Endothelial cell of umbilical vein (primary cell): ENCODE measurements at regions of chr20 and their contacts with region 1.

Region 1: DNA sequence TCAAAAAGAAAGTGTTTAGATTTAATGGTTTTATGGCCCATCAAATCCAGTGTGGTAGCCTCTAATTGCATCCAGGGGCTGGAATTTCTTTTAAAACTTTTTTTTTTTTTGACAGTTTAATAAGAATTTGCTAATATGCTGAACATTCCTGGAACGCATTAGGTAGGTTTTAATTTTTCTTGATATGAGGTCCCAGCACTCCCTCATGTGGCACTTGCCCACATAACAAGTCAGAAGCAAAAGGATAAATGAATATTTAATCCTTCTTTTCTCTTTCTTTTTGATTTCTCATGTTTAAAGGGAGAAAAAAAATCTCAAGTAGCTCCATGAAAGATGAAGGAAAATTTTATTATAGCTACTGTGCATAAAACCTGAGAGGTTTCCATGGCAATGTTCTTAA is 13.5 kb downstream of the HAO1 start:
- DNase-seq: peak; percentile 75
- H3K4me3 ChIP-seq: no peak overlapping the region
- H3K27ac ChIP-seq: peak overlapping the region; percentile 92
- H3K4me1 ChIP-seq: peaks cover 26% of the 10 kb centered on the region
- H3K27me3 ChIP-seq: no peaks in the 10 kb centered on the region
- CTCF ChIP-seq: peak; percentile 47 to 52
- POLR2A ChIP-seq: no peak

Region 2: GRCh38 chr20:6583134-6583738 is 1343.5 kb before region 1 on chr20:
- CTCF ChIA-PET with region 1: interaction called, 3 read pairs
- POLR2A ChIA-PET with region 1: no interaction called
- dilution Hi-C with region 1: no loop called
- intact Hi-C with region 1: loop called (anchors 2 kb)
- DNase-seq: peak; percentile 78
- H3K4me3 ChIP-seq: no peak overlapping the region
- H3K27ac ChIP-seq: peak overlapping the region; percentile 24
- H3K4me1 ChIP-seq: peaks cover 15% of the 10 kb centered on the region
- H3K27me3 ChIP-seq: no peaks in the 10 kb centered on the region
- CTCF ChIP-seq: peak; percentile 56 to 61
- POLR2A ChIP-seq: no peak

Region 3: DNA sequence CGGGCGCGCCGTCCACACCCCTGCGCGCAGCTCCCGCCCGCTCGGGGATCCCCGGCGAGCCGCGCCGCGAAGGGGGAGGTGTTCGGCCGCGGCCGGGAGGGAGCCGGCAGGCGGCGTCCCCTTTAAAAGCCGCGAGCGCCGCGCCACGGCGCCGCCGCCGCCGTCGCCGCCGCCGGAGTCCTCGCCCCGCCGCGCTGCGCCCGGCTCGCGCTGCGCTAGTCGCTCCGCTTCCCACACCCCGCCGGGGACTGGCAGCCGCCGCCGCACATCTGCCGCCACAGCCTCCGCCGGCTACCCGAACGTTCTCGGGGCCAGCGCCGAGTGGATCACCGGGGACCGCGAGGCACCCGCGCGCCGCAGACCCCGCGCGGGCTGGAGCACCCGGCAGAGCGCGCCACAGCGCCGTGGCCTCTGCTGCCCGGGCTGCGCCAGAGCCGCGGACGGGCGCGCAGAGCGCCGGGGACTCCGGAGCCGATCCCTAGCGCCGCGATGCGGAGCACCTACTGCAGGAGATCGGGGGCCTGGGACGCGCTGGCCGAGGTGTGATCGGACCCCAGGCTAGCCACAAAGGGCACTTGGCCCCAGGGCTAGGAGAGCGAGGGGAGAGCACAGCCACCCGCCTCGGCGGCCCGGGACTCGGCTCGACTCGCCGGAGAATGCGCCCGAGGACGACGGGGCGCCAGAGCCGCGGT is 1159.1 kb before region 1 on chr20 and contains the start of gene BMP2:
- CTCF ChIA-PET with region 1: interaction called, 9 read pairs
- POLR2A ChIA-PET with region 1: no interaction called
- dilution Hi-C with region 1: no loop called
- intact Hi-C with region 1: loop called (anchors 2 kb)
- DNase-seq: peak; percentile 74
- H3K4me3 ChIP-seq: peak within 1 kb of the TSS; percentile 87 to 99 (median 92)
- H3K27ac ChIP-seq: peak within 1 kb of the TSS; percentile 61
- H3K4me1 ChIP-seq: peaks cover 21% of the 10 kb centered on the region
- H3K27me3 ChIP-seq: no peaks in the 10 kb centered on the region
- CTCF ChIP-seq: no peak
- POLR2A ChIP-seq: peak; percentile 46
- total RNA-seq, gene BMP2: 11.1 and 15.7 TPM in 2 replicates

Region 4: GRCh38 chr20:7375905-7376304 is 550.9 kb before region 1 on chr20:
- CTCF ChIA-PET with region 1: no interaction called
- POLR2A ChIA-PET with region 1: no interaction called
- dilution Hi-C with region 1: no loop called
- intact Hi-C with region 1: loop called (anchors 5 kb)
- DNase-seq: peak; percentile 34
- H3K4me3 ChIP-seq: no peak overlapping the region
- H3K27ac ChIP-seq: no peak overlapping the region
- H3K4me1 ChIP-seq: no peaks in the 10 kb centered on the region
- H3K27me3 ChIP-seq: no peaks in the 10 kb centered on the region
- CTCF ChIP-seq: peak; percentile 9 to 23
- POLR2A ChIP-seq: no peak

Region 5: GRCh38 chr20:7497985-7498384 is 428.8 kb before region 1 on chr20:
- CTCF ChIA-PET with region 1: no interaction called
- POLR2A ChIA-PET with region 1: no interaction called
- dilution Hi-C with region 1: no loop called
- intact Hi-C with region 1: loop called (anchors 2 kb)
- DNase-seq: peak; percentile 94
- H3K4me3 ChIP-seq: no peak overlapping the region
- H3K27ac ChIP-seq: peak overlapping the region; percentile 69
- H3K4me1 ChIP-seq: peaks cover 25% of the 10 kb centered on the region
- H3K27me3 ChIP-seq: no peaks in the 10 kb centered on the region
- CTCF ChIP-seq: no peak
- POLR2A ChIP-seq: peak; percentile 26